Activated naive CD4-positive, alpha-beta T cell treated with anti-CD3 and anti-CD28 coated beads for 36 hours (primary cell): ENCODE measurements at regions of chr14 and their contacts with region 1.

Region 1: DNA sequence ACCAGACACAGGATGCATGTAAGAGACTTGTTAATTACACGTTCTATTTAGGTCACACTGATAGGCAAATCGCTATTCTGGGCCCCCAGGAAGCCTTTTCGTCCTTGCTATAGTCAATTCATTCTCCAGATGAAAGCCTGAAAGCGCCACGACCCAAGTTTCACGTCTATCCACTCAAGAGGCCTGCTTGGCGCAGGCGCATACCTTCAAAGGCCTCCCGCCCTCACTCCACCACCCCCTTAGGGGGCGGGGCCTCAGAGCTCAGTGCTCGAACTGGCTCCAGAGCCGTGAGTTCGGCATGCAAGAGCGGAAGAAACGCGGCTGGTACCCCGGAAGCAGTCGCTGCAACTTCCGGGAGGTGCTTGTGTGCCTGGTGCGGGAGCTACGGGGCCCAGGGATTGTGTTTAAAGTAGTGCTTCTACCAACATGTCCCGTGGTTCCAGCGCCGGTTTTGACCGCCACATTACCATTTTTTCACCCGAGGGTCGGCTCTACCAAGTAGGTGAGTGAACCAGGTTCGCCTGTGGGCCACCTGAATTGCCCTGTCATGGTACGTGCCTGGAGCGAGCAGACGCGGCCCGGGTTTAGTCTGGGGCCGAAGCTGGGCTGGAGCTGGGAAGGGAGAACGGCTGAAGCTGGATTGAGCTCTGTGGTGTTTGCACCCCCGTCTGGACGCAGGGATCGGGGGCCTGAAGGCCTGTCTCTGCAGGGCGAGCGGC is at the start of gene PSMA6:
- DNase-seq: peak; percentile 99
- H3K4me3 Mint-ChIP-seq: peak within 1 kb of the TSS; percentile 98
- H3K27ac Mint-ChIP-seq: peak within 1 kb of the TSS; percentile 97
- H3K4me1 Mint-ChIP-seq: peaks cover 53% of the 10 kb centered on the region
- H3K27me3 Mint-ChIP-seq: no peaks in the 10 kb centered on the region
- total RNA-seq, gene PSMA6: 433 to 437 TPM

Region 2: DNA sequence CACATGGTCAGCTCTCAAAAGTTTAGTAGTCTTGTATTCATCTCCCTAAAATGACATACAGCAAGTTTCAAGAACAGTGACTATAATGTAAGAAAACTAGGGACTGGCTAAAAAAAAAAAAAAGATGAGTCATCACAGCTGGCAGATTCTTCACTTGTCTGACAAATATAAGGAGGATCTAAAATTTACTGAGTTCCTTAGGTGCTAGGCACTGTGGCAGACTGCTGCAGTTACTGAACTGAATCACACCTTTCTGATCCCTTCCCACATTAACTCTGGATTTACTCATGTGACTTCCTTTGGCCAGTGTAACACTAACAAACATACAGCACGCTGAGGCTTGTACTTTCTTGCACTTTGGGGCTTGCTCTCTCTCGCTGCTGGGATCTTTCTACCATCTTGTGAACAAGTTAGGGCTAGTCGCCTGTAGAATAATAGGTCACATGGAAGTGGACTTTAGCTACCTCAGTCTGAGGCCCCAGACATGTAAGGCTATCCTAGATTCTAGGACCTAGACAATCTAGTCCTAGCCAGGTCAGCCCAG is 449.1 kb before region 1 on chr14:
- CTCF ChIA-PET with region 1: no interaction called
- intact Hi-C with region 1: loop called (anchors 5 kb)
- DNase-seq: peak; percentile 59
- H3K4me3 Mint-ChIP-seq: no peak overlapping the region
- H3K27ac Mint-ChIP-seq: peak overlapping the region; percentile 89
- H3K4me1 Mint-ChIP-seq: peaks cover 30% of the 10 kb centered on the region
- H3K27me3 Mint-ChIP-seq: no peaks in the 10 kb centered on the region

Region 3: GRCh38 chr14:35159742-35160409 is 132.3 kb before region 1 on chr14:
- CTCF ChIA-PET with region 1: no interaction called
- intact Hi-C with region 1: loop called (anchors 2 kb)
- DNase-seq: no peak
- H3K4me3 Mint-ChIP-seq: no peak overlapping the region
- H3K27ac Mint-ChIP-seq: peak overlapping the region; percentile 32
- H3K4me1 Mint-ChIP-seq: peaks cover 52% of the 10 kb centered on the region
- H3K27me3 Mint-ChIP-seq: no peaks in the 10 kb centered on the region

Region 4: DNA sequence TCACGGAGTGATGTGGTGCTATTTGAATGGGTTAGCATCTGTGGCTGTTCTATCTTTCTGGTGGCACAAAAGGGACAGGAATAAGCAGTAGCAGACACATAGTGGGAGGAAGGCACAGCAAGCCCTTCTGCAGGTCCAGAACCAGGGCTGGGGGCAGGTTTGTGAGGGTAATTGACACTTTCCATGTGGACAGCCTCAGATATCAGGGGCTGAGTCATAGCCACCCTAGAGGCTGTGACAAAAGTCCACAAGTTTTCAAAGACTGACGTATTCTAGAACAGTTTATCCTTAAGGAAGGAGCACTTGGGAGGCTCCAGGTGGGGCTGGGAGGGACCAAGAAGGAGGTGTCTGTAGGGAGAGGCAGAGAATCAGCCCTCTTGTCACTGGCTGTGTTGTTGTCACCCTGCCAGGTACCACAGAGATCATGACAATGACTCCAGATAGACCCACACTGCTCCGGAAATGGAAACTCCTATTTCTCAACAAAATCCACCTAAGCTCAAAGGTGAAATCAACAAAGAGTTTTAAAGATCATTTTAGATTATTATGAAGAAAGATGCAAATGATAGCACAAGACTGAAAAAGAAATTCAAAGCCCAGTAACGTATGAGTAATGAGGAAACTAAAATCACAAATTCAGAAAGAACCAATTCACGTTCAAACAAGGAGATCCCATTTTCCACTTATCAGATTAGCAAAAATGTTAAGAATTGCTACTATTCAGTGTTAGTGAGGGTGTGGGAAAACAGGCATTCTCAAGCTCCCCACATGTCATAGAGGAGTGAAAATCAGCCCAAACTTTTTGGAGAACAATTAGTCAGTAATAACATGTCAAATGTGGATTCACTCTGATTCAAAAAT is 64.0 kb after region 1 on chr14:
- CTCF ChIA-PET with region 1: interaction called, 3 read pairs
- intact Hi-C with region 1: loop called (anchors 1 kb)
- DNase-seq: peak; percentile 86
- H3K4me3 Mint-ChIP-seq: peak overlapping the region; percentile 12
- H3K27ac Mint-ChIP-seq: peak overlapping the region; percentile 91
- H3K4me1 Mint-ChIP-seq: peaks cover 46% of the 10 kb centered on the region
- H3K27me3 Mint-ChIP-seq: no peaks in the 10 kb centered on the region

Region 5: GRCh38 chr14:35533357-35534207 is 241.4 kb after region 1 on chr14 and contains the start of gene INSM2:
- CTCF ChIA-PET with region 1: no interaction called
- intact Hi-C with region 1: loop called (anchors 10 kb)
- DNase-seq: peak; percentile 61
- H3K4me3 Mint-ChIP-seq: peak within 1 kb of the TSS; percentile 73
- H3K27ac Mint-ChIP-seq: no peak within 1 kb of the TSS
- H3K4me1 Mint-ChIP-seq: peaks cover 10% of the 10 kb centered on the region
- H3K27me3 Mint-ChIP-seq: peaks cover 61% of the 10 kb centered on the region
- total RNA-seq, gene INSM2: not detected